ENCODE measurements at regions of chr13 and their contacts with region 1.

Region 1: DNA sequence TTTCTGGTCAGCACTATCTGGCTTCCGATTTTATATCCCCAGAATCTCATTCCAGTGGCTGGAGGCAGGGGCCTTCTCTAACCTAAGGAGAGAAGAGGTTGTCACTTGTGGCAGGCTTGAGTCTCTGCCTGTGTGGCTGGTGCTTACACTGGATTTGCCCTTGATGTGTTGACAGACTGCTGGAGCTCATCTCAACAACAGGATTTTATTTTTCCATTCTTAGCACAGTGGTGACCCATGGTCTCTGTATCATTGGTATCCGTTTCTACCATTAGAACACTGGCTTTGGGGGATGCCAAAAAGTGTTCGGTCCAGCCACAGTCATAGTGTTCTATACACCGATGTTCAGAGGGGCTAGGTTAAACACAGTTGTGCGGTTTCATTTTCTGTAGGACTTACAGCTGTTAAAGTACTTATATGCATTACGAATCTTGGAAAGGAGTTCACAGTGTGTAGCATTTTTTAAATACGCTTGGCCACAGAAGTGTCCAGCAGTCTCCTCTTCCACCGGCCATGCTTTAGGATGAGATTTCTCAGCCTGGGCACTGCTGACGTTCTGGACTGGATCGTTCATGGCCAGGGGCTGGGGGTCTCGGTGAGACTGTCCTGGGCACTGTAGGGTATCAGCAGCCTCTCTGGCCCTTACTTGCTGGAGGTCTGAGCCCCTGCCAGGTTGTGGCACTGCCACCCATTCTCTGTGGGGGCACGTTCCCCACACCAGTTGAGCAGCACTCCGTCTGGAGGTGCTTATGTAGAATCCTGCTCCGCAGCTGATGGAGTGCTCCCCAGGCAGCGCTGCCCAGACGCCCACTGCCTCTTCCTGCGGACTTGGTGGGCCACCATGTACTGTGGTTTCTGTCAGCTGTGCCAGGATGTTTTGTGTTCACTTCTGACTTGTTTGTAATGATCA is 41.4 kb upstream of the TEX29 start:
- DNase-seq: no peak
- ATAC-seq: peak; percentile 61 to 82 (median 73)
- H3K4me3 ChIP-seq: no peak overlapping the region
- H3K27ac ChIP-seq: peak overlapping the region; percentile 88
- H3K4me1 ChIP-seq: peaks cover 54% of the 10 kb centered on the region
- H3K27me3 ChIP-seq: no peaks in the 10 kb centered on the region
- CTCF ChIP-seq: no peak

Region 2: DNA sequence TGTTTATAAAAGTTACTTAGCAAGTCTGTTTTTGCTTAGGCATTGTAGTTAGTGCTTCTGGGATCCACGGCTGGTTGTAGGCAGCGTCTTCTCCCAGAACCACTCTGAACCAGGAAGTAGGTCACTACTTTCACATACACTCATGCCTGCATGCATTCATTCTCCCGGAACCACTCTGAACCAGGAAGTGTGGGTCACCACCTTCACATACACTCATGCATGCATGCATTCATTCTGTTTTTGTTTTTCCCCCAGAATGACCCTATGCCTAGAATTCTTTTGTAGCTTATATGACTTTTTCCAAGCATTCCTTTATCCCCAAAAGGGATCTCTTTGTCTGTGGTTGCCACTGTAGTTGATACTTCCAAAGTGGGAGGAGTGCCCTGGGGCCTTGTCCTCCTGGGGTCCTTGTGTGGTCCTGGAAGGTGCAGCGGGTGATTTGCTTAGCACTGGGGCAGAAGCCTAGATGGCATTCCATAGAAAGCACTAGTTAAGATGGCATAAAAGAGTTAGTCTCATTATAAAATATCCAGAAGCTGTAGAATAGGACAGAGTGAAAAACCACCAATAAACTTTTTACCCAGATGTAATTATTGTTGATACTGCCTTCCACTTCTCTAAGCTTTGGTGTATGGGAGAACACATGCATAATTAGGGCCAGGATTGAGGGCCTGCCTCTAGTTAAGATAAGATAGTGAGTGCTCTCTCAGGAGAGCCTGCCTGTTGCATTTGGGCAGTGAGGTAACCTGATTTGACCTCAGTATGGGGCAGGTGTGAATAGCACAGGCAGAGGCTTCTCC is 27.2 kb before region 1 on chr13:
- intact Hi-C with region 1: loop called in 1 of 2 experiments (anchors 2 kb)
- DNase-seq: no peak
- ATAC-seq: no peak
- H3K4me3 ChIP-seq: no peak overlapping the region
- H3K27ac ChIP-seq: peak overlapping the region; percentile 20
- H3K4me1 ChIP-seq: peaks cover 85% of the 10 kb centered on the region
- H3K27me3 ChIP-seq: no peaks in the 10 kb centered on the region
- CTCF ChIP-seq: no peak

Measured in psoas muscle (tissue), 8 donors.